IMR-90 (cell line): ENCODE measurements at regions of chr22 and their contacts with region 1.

Region 1: DNA sequence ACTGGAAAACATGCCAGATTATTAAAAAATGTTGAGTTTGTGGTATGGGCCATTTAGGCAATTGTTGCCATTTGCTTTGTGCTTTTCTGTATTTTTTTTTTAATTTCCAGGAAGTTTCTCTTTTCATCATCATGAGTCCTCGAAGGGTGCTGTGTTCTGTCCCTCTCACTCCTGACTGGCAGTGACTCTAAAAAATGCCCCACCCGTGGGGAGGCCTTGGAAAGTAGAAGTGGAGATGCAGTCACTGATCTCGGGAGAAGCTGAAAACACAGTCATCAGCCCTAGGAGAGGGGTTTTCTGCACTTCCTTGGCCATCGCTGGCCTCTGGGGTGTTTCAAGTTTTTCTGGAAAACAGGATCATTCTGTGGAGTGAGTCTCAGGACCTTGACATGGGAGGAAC is 98.5 kb upstream of the GRK3 start:
- DNase-seq: no peak
- ATAC-seq: no peak
- H3K4me3 ChIP-seq: no peak overlapping the region
- H3K27ac ChIP-seq: no peak overlapping the region
- H3K4me1 ChIP-seq: no peaks in the 10 kb centered on the region
- H3K27me3 ChIP-seq: no peaks in the 10 kb centered on the region
- CTCF ChIP-seq: no peak
- POLR2A ChIP-seq: no peak
- RAD21 ChIP-seq: no peak

Region 2: GRCh38 chr22:25202290-25202921 is 263.5 kb before region 1 on chr22:
- CTCF ChIA-PET with region 1: no interaction called
- POLR2A ChIA-PET with region 1: no interaction called
- dilution Hi-C with region 1: no loop called
- in situ Hi-C with region 1: no loop called
- intact Hi-C with region 1: loop called (anchors 2 kb)
- DNase-seq: peak; percentile 43
- ATAC-seq: peak; percentile 97
- H3K4me3 ChIP-seq: no peak overlapping the region
- H3K27ac ChIP-seq: no peak overlapping the region
- H3K4me1 ChIP-seq: no peaks in the 10 kb centered on the region
- H3K27me3 ChIP-seq: no peaks in the 10 kb centered on the region
- CTCF ChIP-seq: peak; percentile 83
- POLR2A ChIP-seq: no peak
- RAD21 ChIP-seq: peak; percentile 72

Region 3: DNA sequence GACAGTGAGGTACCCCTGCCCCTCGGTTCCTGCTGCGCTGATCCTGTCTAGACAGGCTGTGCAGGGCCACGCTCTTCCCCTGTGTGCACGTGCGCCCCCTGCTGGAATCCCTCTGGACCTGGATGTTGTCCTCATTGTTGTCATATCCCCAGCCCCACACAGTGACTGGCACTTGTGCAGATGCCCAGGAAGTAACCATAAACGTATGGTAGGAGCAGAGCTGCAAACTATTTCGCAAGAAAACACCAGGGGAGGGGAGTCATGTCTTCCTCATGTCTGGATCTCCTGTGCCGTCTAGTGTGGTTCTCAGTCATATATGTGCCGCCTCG is 131.8 kb before region 1 on chr22:
- CTCF ChIA-PET with region 1: no interaction called
- POLR2A ChIA-PET with region 1: no interaction called
- dilution Hi-C with region 1: no loop called
- in situ Hi-C with region 1: no loop called
- intact Hi-C with region 1: loop called (anchors 10 kb)
- DNase-seq: peak; percentile 16
- ATAC-seq: peak; percentile 77
- H3K4me3 ChIP-seq: no peak overlapping the region
- H3K27ac ChIP-seq: no peak overlapping the region
- H3K4me1 ChIP-seq: no peaks in the 10 kb centered on the region
- H3K27me3 ChIP-seq: no peaks in the 10 kb centered on the region
- CTCF ChIP-seq: peak; percentile 48
- POLR2A ChIP-seq: no peak
- RAD21 ChIP-seq: peak; percentile 39; the same call in 1 of the 2 replicates

Region 4: DNA sequence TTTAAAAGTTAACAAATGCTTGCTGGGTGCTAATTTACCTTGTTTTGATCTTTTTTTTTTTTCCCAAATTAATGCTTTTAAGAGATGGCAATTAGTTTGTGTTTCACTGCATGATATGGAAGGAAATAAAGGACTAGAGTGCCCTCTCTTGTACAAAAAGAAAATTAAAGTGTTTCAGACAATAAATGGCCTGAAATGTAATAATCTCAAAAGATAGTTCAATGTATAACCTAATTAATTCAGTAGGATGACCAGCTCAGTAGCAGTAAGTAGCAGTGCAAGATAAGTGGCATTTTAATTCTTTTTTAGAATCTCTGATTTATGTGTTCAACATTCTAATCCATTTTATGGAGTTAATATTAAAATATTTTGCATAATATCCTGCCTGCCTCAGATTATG is 236.1 kb after region 1 on chr22:
- CTCF ChIA-PET with region 1: interaction called, 3 read pairs
- POLR2A ChIA-PET with region 1: no interaction called
- dilution Hi-C with region 1: no loop called
- in situ Hi-C with region 1: loop called (anchors 5 kb)
- intact Hi-C with region 1: loop called (anchors 1 kb)
- DNase-seq: peak; percentile 29
- ATAC-seq: peak; percentile 56; the same call in 1 of the 2 replicates
- H3K4me3 ChIP-seq: no peak overlapping the region
- H3K27ac ChIP-seq: no peak overlapping the region
- H3K4me1 ChIP-seq: no peaks in the 10 kb centered on the region
- H3K27me3 ChIP-seq: no peaks in the 10 kb centered on the region
- CTCF ChIP-seq: peak; percentile 62
- POLR2A ChIP-seq: no peak
- RAD21 ChIP-seq: peak; percentile 68

Region 5: GRCh38 chr22:25777870-25778269 is 311.9 kb after region 1 on chr22:
- CTCF ChIA-PET with region 1: interaction called, 6 read pairs
- POLR2A ChIA-PET with region 1: no interaction called
- dilution Hi-C with region 1: no loop called
- in situ Hi-C with region 1: no loop called
- intact Hi-C with region 1: loop called (anchors 1 kb)
- DNase-seq: peak; percentile 45
- ATAC-seq: peak; percentile 64
- H3K4me3 ChIP-seq: no peak overlapping the region
- H3K27ac ChIP-seq: no peak overlapping the region
- H3K4me1 ChIP-seq: no peaks in the 10 kb centered on the region
- H3K27me3 ChIP-seq: peaks cover 2% of the 10 kb centered on the region; the same call in 1 of the 2 replicates
- CTCF ChIP-seq: peak; percentile 38
- POLR2A ChIP-seq: no peak
- RAD21 ChIP-seq: peak; percentile 40; the same call in 1 of the 2 replicates

Region 6: DNA sequence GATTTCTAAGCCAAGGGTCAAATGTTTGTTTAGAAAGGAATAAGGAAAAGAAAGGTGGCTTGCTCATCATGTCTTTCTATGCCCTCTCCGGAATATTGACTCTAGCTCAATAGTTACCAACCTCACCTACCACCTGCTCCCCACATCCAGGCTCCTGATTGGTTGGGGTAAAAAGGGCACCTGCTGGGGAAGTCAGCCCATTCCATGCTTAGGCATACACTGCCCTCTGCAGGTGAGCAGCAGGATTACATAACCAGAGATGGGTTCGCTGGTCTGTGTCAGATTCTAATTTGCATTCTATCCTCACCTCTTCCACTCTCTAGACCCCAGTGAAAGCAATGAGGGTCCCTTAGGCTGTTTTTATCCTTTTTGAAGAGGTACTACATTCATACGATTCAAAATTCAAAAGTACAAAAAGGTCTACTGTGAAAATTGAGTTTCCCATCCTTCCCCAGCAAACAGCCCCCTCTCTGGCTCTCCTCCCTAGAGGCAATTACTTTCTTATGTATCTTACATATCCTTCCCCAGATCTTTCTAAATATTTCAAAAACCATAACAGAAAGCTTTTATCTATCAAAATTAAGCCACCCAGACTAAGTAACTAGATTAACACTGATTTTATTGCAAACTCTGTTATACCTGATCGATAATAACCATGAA is 865.1 kb after region 1 on chr22:
- CTCF ChIA-PET with region 1: no interaction called
- POLR2A ChIA-PET with region 1: no interaction called
- dilution Hi-C with region 1: no loop called
- in situ Hi-C with region 1: loop called (anchors 25 kb)
- intact Hi-C with region 1: loop called (anchors 10 kb)
- DNase-seq: peak; percentile 23
- ATAC-seq: peak; percentile 86
- H3K4me3 ChIP-seq: no peak overlapping the region
- H3K27ac ChIP-seq: no peak overlapping the region
- H3K4me1 ChIP-seq: no peaks in the 10 kb centered on the region
- H3K27me3 ChIP-seq: peaks cover 5% of the 10 kb centered on the region; the same call in 1 of the 2 replicates
- CTCF ChIP-seq: peak; percentile 81
- POLR2A ChIP-seq: no peak
- RAD21 ChIP-seq: peak; percentile 88